Activated CD4-positive, alpha-beta T cell treated with anti-CD3 and anti-CD28 coated beads, Interleukin-2, amount 10 ng/mL, durations not matched to agents 24 days and 14 days (primary cell): ENCODE measurements at regions of chr20 and their contacts with region 1.

Region 1: DNA sequence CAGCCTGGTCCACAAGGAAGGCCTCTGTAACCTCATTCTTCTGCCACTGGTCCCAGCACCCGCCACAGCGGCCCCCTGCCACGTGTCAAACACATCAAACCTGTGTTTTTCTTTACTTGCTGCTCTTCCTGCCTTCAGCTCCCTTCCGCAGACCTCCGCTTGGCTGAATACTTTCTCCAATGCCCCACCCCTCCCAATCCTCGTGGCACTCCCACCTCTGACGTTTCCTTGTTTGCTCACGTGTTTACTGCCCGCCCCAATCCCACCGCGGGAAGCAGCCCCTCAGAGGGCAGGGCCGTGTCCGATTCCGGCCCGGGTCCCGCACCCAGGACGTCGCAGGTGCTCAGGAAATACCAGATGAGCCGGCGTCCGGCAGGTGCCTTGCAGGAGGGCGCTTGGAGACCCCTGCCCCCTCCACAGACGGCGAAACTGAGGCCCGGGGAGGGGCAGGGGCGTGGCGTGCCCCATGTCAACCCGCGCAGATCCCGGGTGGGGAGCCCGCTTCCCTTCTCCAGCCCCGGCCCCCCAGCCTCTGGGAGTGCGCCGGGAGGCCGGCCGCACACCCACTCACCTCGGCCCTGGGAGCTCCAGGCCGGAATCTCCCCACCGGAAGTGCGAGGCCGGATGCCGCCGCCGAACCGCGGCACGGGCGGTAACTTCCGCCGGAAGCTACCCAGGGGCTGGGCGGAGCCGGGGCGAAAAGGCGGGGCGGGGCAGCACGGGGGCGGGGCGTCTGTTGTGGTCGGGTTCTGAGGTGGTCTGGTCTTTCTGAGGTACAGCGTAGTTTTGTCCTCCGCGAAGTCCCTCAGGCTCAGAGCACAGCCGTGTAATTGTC is 42.4 kb downstream of the ELMO2 start:
- DNase-seq: peak; percentile 96
- H3K4me3 Mint-ChIP-seq: peak overlapping the region; percentile 93
- H3K27ac Mint-ChIP-seq: peak overlapping the region; percentile 80
- H3K4me1 Mint-ChIP-seq: peaks cover 71% of the 10 kb centered on the region
- H3K27me3 Mint-ChIP-seq: no peaks in the 10 kb centered on the region

Region 2: GRCh38 chr20:45507011-45507820 is 856.8 kb before region 1 on chr20:
- intact Hi-C with region 1: no loop called
- DNase-seq: no peak
- H3K4me3 Mint-ChIP-seq: no peak overlapping the region
- H3K27ac Mint-ChIP-seq: peak overlapping the region; percentile 16
- H3K4me1 Mint-ChIP-seq: peaks cover 9% of the 10 kb centered on the region
- H3K27me3 Mint-ChIP-seq: peaks cover 23% of the 10 kb centered on the region

Region 3: GRCh38 chr20:46406199-46406985 is 42.4 kb after region 1 on chr20 and contains the start of gene ELMO2:
- intact Hi-C with region 1: loop called (anchors 1 kb)
- DNase-seq: peak; percentile 99
- H3K4me3 Mint-ChIP-seq: peak within 1 kb of the TSS; percentile 88
- H3K27ac Mint-ChIP-seq: peak within 1 kb of the TSS; percentile 96
- H3K4me1 Mint-ChIP-seq: peaks cover 58% of the 10 kb centered on the region
- H3K27me3 Mint-ChIP-seq: peaks cover 2% of the 10 kb centered on the region
- total RNA-seq, gene ELMO2: 64.5 and 66.4 TPM in 2 replicates